SK-N-SH (cell line): ENCODE measurements at regions of chr2 and their contacts with region 1.

Region 1: GRCh38 chr2:100262555-100263320 is 59.6 kb downstream of the LONRF2 start:
- DNase-seq: peak; percentile 78
- H3K4me3 ChIP-seq: peak overlapping the region in 1 of 2 experiments; percentile 33; a peak in 1 of 4 replicates
- H3K27ac ChIP-seq: no peak overlapping the region
- H3K4me1 ChIP-seq: peaks cover 0 to 3% of the 10 kb centered on the region in 2 experiments; a peak in 1 of 4 replicates
- H3K27me3 ChIP-seq: no peaks in the 10 kb centered on the region
- CTCF ChIP-seq: peak; percentile 97
- EP300 ChIP-seq: no peak
- RAD21 ChIP-seq: peak; percentile 95

Region 2: GRCh38 chr2:99489761-99490622 is 772.7 kb before region 1 on chr2 and contains the start of gene REV1:
- CTCF ChIA-PET with region 1: interaction called, 10 read pairs
- POLR2A ChIA-PET with region 1: no interaction called
- DNase-seq: peak; percentile 99
- H3K4me3 ChIP-seq: peak within 1 kb of the TSS; percentile 78 to 96
- H3K27ac ChIP-seq: peak within 1 kb of the TSS; percentile 79 to 93
- H3K4me1 ChIP-seq: peaks cover 0 to 14% of the 10 kb centered on the region in 2 experiments; a peak in 2 of 4 replicates
- H3K27me3 ChIP-seq: no peaks in the 10 kb centered on the region; the same call in 1 of the 2 replicates
- CTCF ChIP-seq: peak; percentile 77
- EP300 ChIP-seq: no peak
- RAD21 ChIP-seq: peak; percentile 80
- polyA plus RNA-seq, gene REV1: 15.9 and 24.2 TPM in 2 replicates

Region 3: DNA sequence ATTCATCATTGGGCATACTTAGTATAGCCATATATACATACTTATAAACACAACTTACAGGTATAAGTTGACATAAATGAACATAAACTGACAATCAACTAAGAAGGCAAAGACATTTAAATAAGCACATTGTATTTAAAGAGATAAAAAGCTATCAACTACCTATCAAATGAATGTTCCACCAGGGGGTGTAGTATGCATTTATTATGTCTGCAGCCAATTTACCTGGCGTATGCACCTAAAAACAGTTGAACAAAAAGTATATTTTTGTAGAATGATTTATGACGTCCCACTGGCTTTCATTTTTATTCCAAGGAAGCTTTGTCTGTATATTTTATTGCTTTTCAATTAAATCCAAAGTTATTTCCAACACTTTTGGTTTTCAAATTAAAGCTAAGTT is 443.9 kb before region 1 on chr2:
- CTCF ChIA-PET with region 1: interaction called, 29 read pairs
- POLR2A ChIA-PET with region 1: no interaction called
- DNase-seq: peak; percentile 30
- H3K4me3 ChIP-seq: no peak overlapping the region
- H3K27ac ChIP-seq: no peak overlapping the region
- H3K4me1 ChIP-seq: no peaks in the 10 kb centered on the region; a peak in 3 of 4 replicates
- H3K27me3 ChIP-seq: no peaks in the 10 kb centered on the region
- CTCF ChIP-seq: peak; percentile 47
- EP300 ChIP-seq: no peak
- RAD21 ChIP-seq: peak; percentile 72

Region 4: GRCh38 chr2:100151310-100151709 is 111.4 kb before region 1 on chr2:
- CTCF ChIA-PET with region 1: no interaction called
- POLR2A ChIA-PET with region 1: no interaction called
- DNase-seq: no peak
- H3K4me3 ChIP-seq: no peak overlapping the region
- H3K27ac ChIP-seq: no peak overlapping the region
- H3K4me1 ChIP-seq: no peaks in the 10 kb centered on the region; a peak in 1 of 4 replicates
- H3K27me3 ChIP-seq: no peaks in the 10 kb centered on the region
- CTCF ChIP-seq: no peak
- EP300 ChIP-seq: no peak
- RAD21 ChIP-seq: no peak

Region 5: DNA sequence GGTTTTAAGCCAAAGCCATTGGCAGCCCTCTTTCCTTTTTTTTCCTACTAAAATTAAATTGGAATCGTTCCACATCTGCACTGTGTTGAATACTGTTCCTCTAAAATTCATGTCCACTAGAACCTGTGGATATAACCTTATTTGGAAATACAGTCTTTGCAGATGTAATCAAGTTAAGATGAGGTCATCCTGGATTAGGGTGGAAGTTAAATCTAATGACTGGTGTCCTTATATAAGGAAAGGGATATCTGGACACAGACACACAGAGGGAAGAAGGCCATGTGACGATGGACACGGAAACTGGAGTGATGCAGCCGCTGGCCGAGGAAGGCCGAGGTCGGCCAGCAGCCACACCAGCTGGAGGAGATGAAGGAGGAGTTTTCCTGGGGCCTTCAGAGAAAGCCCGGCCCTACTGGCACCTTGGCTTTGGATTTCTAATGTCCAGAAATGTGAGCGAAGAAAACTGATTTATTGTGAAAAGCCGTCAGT is 10.1 kb after region 1 on chr2:
- CTCF ChIA-PET with region 1: interaction called, 107 read pairs
- POLR2A ChIA-PET with region 1: no interaction called
- DNase-seq: peak; percentile 32
- H3K4me3 ChIP-seq: no peak overlapping the region
- H3K27ac ChIP-seq: no peak overlapping the region; a peak in 2 of 4 replicates
- H3K4me1 ChIP-seq: peaks cover 0 to 7% of the 10 kb centered on the region in 2 experiments; a peak in 2 of 4 replicates
- H3K27me3 ChIP-seq: no peaks in the 10 kb centered on the region
- CTCF ChIP-seq: no peak
- EP300 ChIP-seq: no peak
- RAD21 ChIP-seq: no peak

Region 6: GRCh38 chr2:100321181-100321865 is 58.6 kb after region 1 on chr2:
- CTCF ChIA-PET with region 1: interaction called, 19 read pairs
- POLR2A ChIA-PET with region 1: no interaction called
- DNase-seq: peak; percentile 80
- H3K4me3 ChIP-seq: peak overlapping the region; percentile 48 to 65; a peak in 3 of 4 replicates
- H3K27ac ChIP-seq: no peak overlapping the region; a peak in 1 of 4 replicates
- H3K4me1 ChIP-seq: peaks cover 0 to 9% of the 10 kb centered on the region in 2 experiments; a peak in 2 of 4 replicates
- H3K27me3 ChIP-seq: peaks cover 22% of the 10 kb centered on the region; the same call in 1 of the 2 replicates
- CTCF ChIP-seq: peak; percentile 32
- EP300 ChIP-seq: no peak
- RAD21 ChIP-seq: no peak

Region 7: GRCh38 chr2:100381240-100381639 is 118.5 kb after region 1 on chr2:
- CTCF ChIA-PET with region 1: interaction called, 467 read pairs
- POLR2A ChIA-PET with region 1: interaction called, 6 read pairs
- DNase-seq: peak; percentile 69
- H3K4me3 ChIP-seq: no peak overlapping the region; a peak in 1 of 4 replicates
- H3K27ac ChIP-seq: no peak overlapping the region
- H3K4me1 ChIP-seq: no peaks in the 10 kb centered on the region
- H3K27me3 ChIP-seq: no peaks in the 10 kb centered on the region
- CTCF ChIP-seq: peak; percentile 90
- EP300 ChIP-seq: no peak
- RAD21 ChIP-seq: peak; percentile 88

Region 8: DNA sequence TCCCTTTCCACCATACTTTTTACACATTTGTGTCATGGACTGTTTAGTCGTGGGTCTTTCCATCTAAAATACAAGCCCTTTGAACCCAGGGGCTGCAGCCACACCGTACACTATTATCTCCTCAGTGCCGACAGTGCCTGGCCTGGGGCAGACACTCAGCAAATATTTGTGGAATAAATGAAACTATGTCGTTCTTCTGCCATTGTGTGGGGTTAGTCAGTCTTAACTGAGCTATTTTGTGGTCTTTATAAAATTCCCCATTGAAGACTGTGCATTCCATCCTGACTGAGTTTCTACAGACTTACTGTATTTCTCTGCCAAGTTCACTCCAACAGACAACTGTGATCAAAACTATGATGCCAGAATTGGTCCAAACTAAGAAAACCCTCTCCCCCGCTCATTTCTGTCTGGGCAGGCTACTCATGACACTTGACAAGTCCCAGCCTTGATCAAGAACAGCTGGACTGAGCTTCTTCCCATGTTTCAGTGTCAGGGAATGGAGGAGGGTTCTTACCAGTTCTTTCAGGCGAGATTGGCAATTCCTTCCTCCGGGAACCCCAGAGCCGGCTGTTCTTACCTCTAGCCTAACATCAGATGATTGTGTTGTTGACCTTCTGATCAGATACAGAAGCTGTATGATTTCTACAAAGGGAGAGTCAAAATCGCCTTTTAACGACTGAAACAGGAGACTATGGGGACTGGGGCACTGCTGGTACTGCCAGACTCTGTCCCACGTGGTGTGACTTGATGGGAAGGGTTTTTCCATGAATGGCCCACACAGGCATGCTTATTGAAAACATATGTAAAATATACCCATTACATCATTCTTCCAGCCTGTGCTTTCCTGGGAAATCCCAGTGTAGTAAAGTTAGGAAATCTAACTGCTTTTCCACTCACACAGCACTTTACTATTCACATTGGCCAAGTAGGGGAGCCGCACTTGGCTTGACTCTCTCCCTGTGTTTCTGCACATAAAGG is 479.8 kb after region 1 on chr2:
- CTCF ChIA-PET with region 1: no interaction called
- POLR2A ChIA-PET with region 1: no interaction called
- DNase-seq: peak; percentile 13
- H3K4me3 ChIP-seq: peak overlapping the region; percentile 12 to 48; a peak in 3 of 4 replicates
- H3K27ac ChIP-seq: peak overlapping the region; percentile 88 to 99
- H3K4me1 ChIP-seq: peaks cover 7 to 26% of the 10 kb centered on the region in 2 experiments
- H3K27me3 ChIP-seq: no peaks in the 10 kb centered on the region
- CTCF ChIP-seq: no peak
- EP300 ChIP-seq: peak; percentile 73 to 99
- RAD21 ChIP-seq: 0 out of 2 replicates have a peak, but pooled peaks have one; percentile 15